ENCODE measurements at regions of chr11 and their contacts with region 1.

Region 1: GRCh38 chr11:64390558-64390957 is 31.6 kb downstream of the RPS6KA4 start:
- DNase-seq: no peak

Region 2: GRCh38 chr11:64436000-64436399 is 45.4 kb after region 1 on chr11:
- intact Hi-C with region 1: loop called (anchors 5 kb)
- DNase-seq: peak in 1 of 10 donors; percentile 67

Measured in posterior cingulate gyrus (tissue), 11 donors.